ENCODE measurements at regions of chr17 and their contacts with region 1.

Region 1: DNA sequence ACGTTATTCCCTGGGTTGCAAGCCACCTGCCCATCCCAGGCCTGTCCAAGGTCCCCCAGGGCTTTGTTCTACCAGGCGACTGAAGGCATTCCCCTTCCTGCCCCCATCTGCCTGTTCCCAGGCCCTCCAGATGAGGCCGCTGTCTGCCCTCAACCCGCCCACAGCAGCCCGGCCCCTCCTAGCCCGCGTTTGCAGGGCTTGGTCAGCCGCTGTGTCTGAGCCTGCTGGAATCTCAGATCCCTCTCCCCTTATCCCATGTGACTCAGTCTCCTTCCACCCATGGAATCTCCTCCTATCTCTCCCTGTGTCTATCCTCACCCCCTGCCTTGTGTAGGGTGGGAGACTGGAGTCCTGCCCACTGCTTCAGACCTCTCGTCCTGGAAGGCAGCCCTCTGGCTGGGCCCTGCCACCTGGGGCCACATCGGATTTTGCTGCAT is 186.0 kb upstream of the TNRC6C start:
- DNase-seq: peak; percentile 18
- ATAC-seq: peak; percentile 96
- H3K4me3 ChIP-seq: no peak overlapping the region
- H3K27ac ChIP-seq: no peak overlapping the region
- H3K4me1 ChIP-seq: peaks cover 3% of the 10 kb centered on the region; the same call in 1 of the 2 replicates
- H3K27me3 ChIP-seq: 0 out of 2 replicates have a peak, but pooled peaks cover 3% of the 10 kb centered on the region
- CTCF ChIP-seq: peak; percentile 90

Region 2: DNA sequence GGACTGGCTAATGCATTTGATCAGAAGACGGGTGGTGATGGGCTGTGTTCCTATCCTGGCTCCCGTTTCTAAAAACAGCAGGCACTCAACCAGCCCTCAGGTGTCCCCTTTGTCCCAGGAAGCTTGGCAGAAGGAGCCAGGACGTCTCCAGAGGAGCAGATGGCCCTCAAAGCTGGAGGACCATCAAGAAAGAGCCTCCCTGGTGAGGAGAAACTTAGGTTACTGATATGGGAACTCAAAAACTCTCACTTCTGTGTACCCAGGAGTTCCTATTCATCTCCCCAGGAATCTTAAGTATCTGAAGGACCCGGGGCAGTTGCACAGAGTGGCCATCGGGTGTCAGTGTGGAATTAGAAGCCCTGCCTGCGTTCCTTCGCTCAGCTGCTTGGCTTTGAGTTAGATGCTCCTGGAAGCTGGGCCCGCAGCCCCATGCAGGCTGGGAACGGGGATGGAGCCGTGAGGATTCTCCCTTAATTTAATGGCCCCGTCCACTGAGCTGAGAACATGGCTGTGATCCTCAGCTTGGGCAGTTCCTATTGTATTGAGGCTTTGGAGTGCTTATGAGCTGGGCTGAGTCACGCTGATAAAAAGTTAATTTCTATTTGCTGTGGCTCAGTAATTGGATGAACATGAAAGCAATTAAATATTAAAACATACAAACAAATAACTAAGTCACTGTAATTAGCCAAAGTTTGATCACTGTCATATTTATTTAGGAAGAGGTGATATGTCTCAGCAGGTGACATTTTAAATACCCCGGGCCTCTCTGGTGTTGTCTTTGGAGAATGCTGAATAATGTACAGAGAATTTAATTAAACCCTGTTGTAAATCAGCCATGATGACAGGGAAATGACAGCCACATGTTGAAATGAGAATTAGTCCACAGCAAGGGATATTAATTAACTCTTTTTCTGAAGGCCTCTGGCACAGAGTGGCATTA is 229.7 kb before region 1 on chr17:
- CTCF ChIA-PET with region 1: no interaction called
- POLR2A ChIA-PET with region 1: no interaction called
- in situ Hi-C with region 1: no loop called
- intact Hi-C with region 1: loop called (anchors 10 kb)
- DNase-seq: peak; percentile 48
- ATAC-seq: peak; percentile 96
- H3K4me3 ChIP-seq: no peak overlapping the region
- H3K27ac ChIP-seq: no peak overlapping the region
- H3K4me1 ChIP-seq: 0 out of 2 replicates have a peak, but pooled peaks cover 2% of the 10 kb centered on the region
- H3K27me3 ChIP-seq: peaks cover 2% of the 10 kb centered on the region; the same call in 1 of the 2 replicates
- CTCF ChIP-seq: peak; percentile 98

Region 3: GRCh38 chr17:77619851-77620250 is 152.6 kb before region 1 on chr17:
- CTCF ChIA-PET with region 1: no interaction called
- POLR2A ChIA-PET with region 1: no interaction called
- in situ Hi-C with region 1: no loop called
- intact Hi-C with region 1: no loop called
- DNase-seq: no peak
- ATAC-seq: no peak
- H3K4me3 ChIP-seq: no peak overlapping the region
- H3K27ac ChIP-seq: no peak overlapping the region
- H3K4me1 ChIP-seq: no peaks in the 10 kb centered on the region
- H3K27me3 ChIP-seq: no peaks in the 10 kb centered on the region; the same call in 1 of the 2 replicates
- CTCF ChIP-seq: no peak

Region 4: GRCh38 chr17:77935121-77935571 is 162.7 kb after region 1 on chr17:
- CTCF ChIA-PET with region 1: no interaction called
- POLR2A ChIA-PET with region 1: interaction called, 12 read pairs
- in situ Hi-C with region 1: no loop called
- intact Hi-C with region 1: no loop called
- DNase-seq: no peak
- ATAC-seq: no peak
- H3K4me3 ChIP-seq: no peak overlapping the region
- H3K27ac ChIP-seq: no peak overlapping the region
- H3K4me1 ChIP-seq: no peaks in the 10 kb centered on the region
- H3K27me3 ChIP-seq: peaks cover 8% of the 10 kb centered on the region; the same call in 1 of the 2 replicates
- CTCF ChIP-seq: no peak

Region 5: DNA sequence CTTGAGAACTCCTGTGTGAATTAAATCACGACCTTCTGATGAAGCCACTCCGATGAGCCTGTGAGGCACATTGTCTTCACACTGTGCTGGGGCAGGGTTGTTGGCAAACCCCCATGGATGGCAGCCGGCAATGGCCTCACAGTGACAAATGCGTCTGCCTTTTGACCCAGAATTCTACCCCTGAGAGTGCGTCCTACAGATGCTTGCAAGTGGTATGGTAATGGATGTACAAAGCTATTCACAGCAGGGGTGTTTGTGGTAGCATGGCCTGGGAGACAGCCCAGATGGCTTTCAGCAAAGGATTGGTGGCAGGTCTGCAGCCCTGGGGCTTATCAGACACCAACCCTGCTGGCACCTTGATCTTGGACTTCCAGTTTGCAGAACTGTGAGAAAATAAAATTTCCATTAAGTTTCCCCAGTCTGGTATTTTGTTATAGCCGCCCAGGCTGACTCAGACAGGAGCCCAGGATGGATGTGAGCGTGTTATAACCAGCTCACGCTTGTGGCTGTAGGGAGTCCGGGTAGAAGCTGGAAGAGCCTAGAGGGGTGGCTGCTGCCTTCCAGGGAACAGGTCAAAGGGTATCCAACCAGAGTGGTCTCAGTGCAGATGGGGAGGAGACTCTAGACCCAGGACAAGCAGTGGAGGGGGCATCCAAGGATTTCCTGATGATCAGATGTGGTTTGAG is 424.8 kb after region 1 on chr17:
- CTCF ChIA-PET with region 1: no interaction called
- POLR2A ChIA-PET with region 1: no interaction called
- in situ Hi-C with region 1: no loop called
- intact Hi-C with region 1: no loop called
- DNase-seq: no peak
- ATAC-seq: no peak; the same call in 1 of the 2 replicates
- H3K4me3 ChIP-seq: no peak overlapping the region
- H3K27ac ChIP-seq: no peak overlapping the region
- H3K4me1 ChIP-seq: no peaks in the 10 kb centered on the region
- H3K27me3 ChIP-seq: no peaks in the 10 kb centered on the region
- CTCF ChIP-seq: no peak

Region 6: GRCh38 chr17:78568494-78569115 is 796.1 kb after region 1 on chr17:
- CTCF ChIA-PET with region 1: interaction called, 13 read pairs
- POLR2A ChIA-PET with region 1: no interaction called
- in situ Hi-C with region 1: no loop called
- intact Hi-C with region 1: no loop called
- DNase-seq: no peak
- ATAC-seq: no peak
- H3K4me3 ChIP-seq: no peak overlapping the region
- H3K27ac ChIP-seq: no peak overlapping the region
- H3K4me1 ChIP-seq: no peaks in the 10 kb centered on the region
- H3K27me3 ChIP-seq: no peaks in the 10 kb centered on the region
- CTCF ChIP-seq: no peak